ENCODE measurements at regions of chr2 and their contacts with region 1.

Region 1: DNA sequence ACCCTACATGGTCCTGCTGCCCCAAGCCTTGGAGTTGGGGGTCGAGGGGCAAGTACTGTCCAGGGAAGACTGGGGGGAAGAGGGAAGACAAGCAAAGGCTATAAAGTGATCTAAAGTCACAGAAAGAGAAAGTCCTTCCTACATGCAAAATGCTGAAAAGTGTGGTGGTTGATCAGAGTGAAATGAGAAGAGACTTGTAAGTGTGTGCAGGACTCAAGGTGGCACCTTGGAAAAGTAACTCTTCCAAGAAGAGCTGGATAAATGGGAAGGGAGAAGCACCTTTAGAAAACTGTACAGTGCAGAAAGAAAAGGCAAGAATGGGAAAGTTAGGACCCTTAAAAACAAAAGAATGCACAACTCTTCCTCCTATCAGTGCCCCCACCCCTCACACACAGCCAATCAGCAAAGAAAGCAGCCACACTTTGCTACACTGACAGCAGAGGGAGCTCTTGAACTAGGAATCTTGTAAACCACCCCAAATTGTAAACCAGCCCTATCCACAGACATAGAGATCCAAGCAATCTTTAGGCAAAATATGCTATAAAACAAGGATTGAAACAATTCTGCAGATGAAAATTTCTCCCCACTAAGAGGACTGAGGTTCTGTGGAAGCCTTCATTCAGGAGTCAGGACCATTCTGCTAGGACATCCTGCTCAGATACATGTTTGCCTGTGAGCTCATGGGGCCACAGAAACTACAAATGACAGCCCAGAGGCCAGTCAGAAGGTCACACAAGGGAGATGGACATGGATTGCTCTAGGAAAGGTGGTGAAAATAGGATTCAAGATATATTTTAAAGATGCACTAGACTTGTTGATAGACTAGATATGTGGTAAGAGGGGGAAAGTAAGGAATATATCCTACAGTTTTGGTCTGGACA is 146.4 kb downstream of the FTCDNL1 start:
- DNase-seq: peak; percentile 38 to 69
- H3K4me3 ChIP-seq: no peak overlapping the region
- H3K4me3 Mint-ChIP-seq: no peak overlapping the region
- H3K27ac Mint-ChIP-seq: no peak overlapping the region
- H3K4me1 ChIP-seq: no peaks in the 10 kb centered on the region
- H3K4me1 Mint-ChIP-seq: peaks cover 12% of the 10 kb centered on the region
- H3K27me3 ChIP-seq: no peaks in the 10 kb centered on the region
- H3K27me3 Mint-ChIP-seq: no peaks in the 10 kb centered on the region
- CTCF ChIP-seq: peak; percentile 85 to 93

Region 2: GRCh38 chr2:199431746-199432213 is 272.8 kb before region 1 on chr2:
- CTCF ChIA-PET with region 1: no interaction called
- POLR2A ChIA-PET with region 1: no interaction called
- intact Hi-C with region 1: no loop called
- DNase-seq: no peak
- H3K4me3 ChIP-seq: no peak overlapping the region
- H3K4me3 Mint-ChIP-seq: no peak overlapping the region
- H3K27ac Mint-ChIP-seq: no peak overlapping the region
- H3K4me1 ChIP-seq: no peaks in the 10 kb centered on the region
- H3K4me1 Mint-ChIP-seq: no peaks in the 10 kb centered on the region
- H3K27me3 ChIP-seq: no peaks in the 10 kb centered on the region
- H3K27me3 Mint-ChIP-seq: no peaks in the 10 kb centered on the region
- CTCF ChIP-seq: no peak

Region 3: DNA sequence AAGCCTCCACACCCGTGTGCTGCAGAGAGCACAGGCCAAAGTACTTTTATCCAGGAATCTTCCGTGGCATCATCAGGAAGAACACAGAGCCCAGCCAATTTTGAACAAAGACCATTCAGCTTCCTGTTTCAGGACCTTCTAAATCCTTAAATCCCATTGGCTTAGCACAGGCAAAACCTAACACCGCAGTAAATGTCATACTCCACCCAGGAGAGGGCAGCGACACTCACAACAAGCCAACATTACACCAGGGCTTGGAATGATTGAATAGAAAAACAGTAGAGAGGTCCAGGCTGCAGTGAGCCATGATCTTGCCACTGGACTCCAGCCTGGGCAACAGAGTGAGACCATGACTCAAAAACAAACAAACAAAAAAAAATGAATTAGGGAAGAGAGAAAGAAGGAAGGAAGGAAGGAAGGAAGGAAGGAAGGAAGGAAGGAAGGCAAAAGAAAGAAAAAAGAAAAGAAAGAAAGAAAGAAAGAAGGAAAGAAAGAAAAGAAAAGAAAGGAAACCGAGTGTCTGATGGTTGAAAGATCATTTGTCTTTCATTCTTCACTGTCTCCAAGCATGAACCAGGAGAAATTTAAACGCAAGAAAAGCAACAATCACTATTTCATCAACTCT is 102.2 kb before region 1 on chr2:
- CTCF ChIA-PET with region 1: no interaction called
- POLR2A ChIA-PET with region 1: no interaction called
- intact Hi-C with region 1: loop called (anchors 1 kb)
- DNase-seq: peak; percentile 49 to 58
- H3K4me3 ChIP-seq: no peak overlapping the region
- H3K4me3 Mint-ChIP-seq: no peak overlapping the region
- H3K27ac Mint-ChIP-seq: no peak overlapping the region
- H3K4me1 ChIP-seq: no peaks in the 10 kb centered on the region
- H3K4me1 Mint-ChIP-seq: peaks cover 7% of the 10 kb centered on the region
- H3K27me3 ChIP-seq: no peaks in the 10 kb centered on the region
- H3K27me3 Mint-ChIP-seq: no peaks in the 10 kb centered on the region
- CTCF ChIP-seq: peak; percentile 35 to 38

Region 4: DNA sequence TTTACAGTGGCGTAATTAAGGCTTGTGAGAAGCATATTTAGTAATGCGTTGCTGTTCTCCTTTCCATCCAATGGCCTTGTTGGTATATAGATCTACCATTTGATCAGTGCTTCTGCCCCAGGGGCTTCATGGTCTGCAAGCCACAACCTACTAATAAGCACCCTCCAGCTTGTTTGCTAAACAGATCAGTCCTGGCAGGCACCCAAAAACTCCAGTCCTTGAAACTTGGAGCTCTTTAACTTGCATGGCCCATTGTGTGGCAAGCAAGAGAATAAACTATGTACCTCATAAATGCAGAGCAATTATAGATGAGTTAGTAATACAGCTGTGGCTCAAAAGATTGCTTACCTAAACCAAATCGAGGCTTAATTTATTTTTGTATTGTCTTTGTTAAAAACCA is 12.1 kb before region 1 on chr2:
- CTCF ChIA-PET with region 1: no interaction called
- POLR2A ChIA-PET with region 1: no interaction called
- intact Hi-C with region 1: no loop called
- DNase-seq: no peak
- H3K4me3 ChIP-seq: no peak overlapping the region
- H3K4me3 Mint-ChIP-seq: no peak overlapping the region
- H3K27ac Mint-ChIP-seq: no peak overlapping the region
- H3K4me1 ChIP-seq: no peaks in the 10 kb centered on the region
- H3K4me1 Mint-ChIP-seq: no peaks in the 10 kb centered on the region
- H3K27me3 ChIP-seq: no peaks in the 10 kb centered on the region
- H3K27me3 Mint-ChIP-seq: no peaks in the 10 kb centered on the region
- CTCF ChIP-seq: no peak

Region 5: GRCh38 chr2:199739413-199740110 is 35.0 kb after region 1 on chr2:
- CTCF ChIA-PET with region 1: interaction called, 25 read pairs
- POLR2A ChIA-PET with region 1: no interaction called
- intact Hi-C with region 1: loop called (anchors 1 kb)
- DNase-seq: peak; percentile 66 to 77
- H3K4me3 ChIP-seq: no peak overlapping the region
- H3K4me3 Mint-ChIP-seq: no peak overlapping the region
- H3K27ac Mint-ChIP-seq: peak overlapping the region; percentile 43
- H3K4me1 ChIP-seq: peaks cover 43% of the 10 kb centered on the region
- H3K4me1 Mint-ChIP-seq: peaks cover 23% of the 10 kb centered on the region
- H3K27me3 ChIP-seq: no peaks in the 10 kb centered on the region
- H3K27me3 Mint-ChIP-seq: peaks cover 4% of the 10 kb centered on the region
- CTCF ChIP-seq: peak; percentile 79 to 91

Region 6: DNA sequence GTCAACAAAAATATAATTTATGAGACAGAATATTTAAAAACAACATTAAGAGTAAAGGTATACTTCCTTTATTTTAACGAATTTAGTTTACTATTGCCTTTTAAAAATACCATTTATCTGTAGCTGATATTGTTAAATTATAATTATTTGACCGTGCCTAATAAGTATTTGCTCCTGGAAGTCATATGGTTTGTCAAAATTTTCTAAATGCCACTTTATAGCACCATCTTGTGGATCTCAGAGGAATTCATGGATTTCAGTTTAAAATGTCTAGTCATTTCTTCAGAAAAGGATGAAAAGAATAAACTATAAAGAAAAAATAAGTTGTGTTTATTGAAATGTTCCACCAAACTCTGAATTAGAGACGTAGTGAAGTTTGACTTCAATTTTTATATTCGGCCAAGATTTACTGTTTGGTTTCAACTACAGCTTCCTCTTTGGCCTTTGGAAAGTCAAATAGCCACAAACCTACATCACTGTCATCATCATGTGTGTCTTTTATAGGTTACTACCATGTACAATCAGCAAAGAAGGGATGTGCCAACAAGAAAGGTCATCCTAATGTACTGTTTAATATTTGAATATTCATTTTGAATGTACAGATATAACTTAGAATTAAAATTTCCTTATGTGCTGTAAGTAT is 156.7 kb after region 1 on chr2:
- CTCF ChIA-PET with region 1: no interaction called
- POLR2A ChIA-PET with region 1: no interaction called
- intact Hi-C with region 1: loop called (anchors 1 kb)
- DNase-seq: no peak
- H3K4me3 ChIP-seq: no peak overlapping the region
- H3K4me3 Mint-ChIP-seq: no peak overlapping the region
- H3K27ac Mint-ChIP-seq: no peak overlapping the region
- H3K4me1 ChIP-seq: no peaks in the 10 kb centered on the region
- H3K4me1 Mint-ChIP-seq: no peaks in the 10 kb centered on the region
- H3K27me3 ChIP-seq: no peaks in the 10 kb centered on the region
- H3K27me3 Mint-ChIP-seq: peaks cover 20% of the 10 kb centered on the region
- CTCF ChIP-seq: peak; percentile 46 to 51

Region 7: DNA sequence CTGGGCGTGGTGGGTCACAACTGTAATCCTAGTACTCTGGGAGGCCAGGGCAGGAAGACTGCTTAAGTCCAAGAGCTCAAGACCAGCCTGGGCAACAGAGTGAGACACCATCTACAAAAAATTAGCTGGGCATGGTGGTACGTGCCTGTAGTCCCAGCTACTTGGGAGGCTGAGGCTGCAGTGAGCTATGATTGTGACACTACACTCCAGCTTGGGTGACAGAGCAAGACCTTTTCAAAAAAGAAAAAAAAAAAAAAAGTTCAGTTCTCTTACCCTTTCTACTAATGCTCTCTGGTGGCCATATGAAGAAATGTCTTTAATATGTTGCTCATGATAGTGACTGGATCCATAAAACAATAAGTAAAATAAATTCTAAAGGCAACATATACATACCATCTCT is 235.8 kb after region 1 on chr2:
- CTCF ChIA-PET with region 1: interaction called, 6 read pairs
- POLR2A ChIA-PET with region 1: no interaction called
- intact Hi-C with region 1: loop called (anchors 1 kb)
- DNase-seq: no peak
- H3K4me3 ChIP-seq: no peak overlapping the region
- H3K4me3 Mint-ChIP-seq: no peak overlapping the region
- H3K27ac Mint-ChIP-seq: no peak overlapping the region
- H3K4me1 ChIP-seq: 0 out of 2 replicates have a peak, but pooled peaks cover 10% of the 10 kb centered on the region
- H3K4me1 Mint-ChIP-seq: no peaks in the 10 kb centered on the region
- H3K27me3 ChIP-seq: no peaks in the 10 kb centered on the region
- H3K27me3 Mint-ChIP-seq: no peaks in the 10 kb centered on the region
- CTCF ChIP-seq: peak; percentile 22 to 46